ENCODE measurements at regions of chr6 and their contacts with region 1.

Region 1: GRCh38 chr6:147202516-147203312 is 1.5 kb upstream of the STXBP5 start:
- DNase-seq: peak; percentile 60 to 96 (median 70)
- ATAC-seq: peak; percentile 84
- H3K4me3 ChIP-seq: peak overlapping the region; percentile 86
- H3K4me3 Mint-ChIP-seq: peak overlapping the region; percentile 94
- H3K27ac ChIP-seq: peak overlapping the region; percentile 89 to 94
- H3K27ac Mint-ChIP-seq: peak overlapping the region; percentile 95
- H3K4me1 ChIP-seq: peaks cover 15% of the 10 kb centered on the region
- H3K4me1 Mint-ChIP-seq: peaks cover 38% of the 10 kb centered on the region
- H3K27me3 ChIP-seq: no peaks in the 10 kb centered on the region
- H3K27me3 Mint-ChIP-seq: no peaks in the 10 kb centered on the region
- CTCF ChIP-seq: no peak

Region 2: GRCh38 chr6:145332001-145332400 is 1870.7 kb before region 1 on chr6:
- CTCF ChIA-PET with region 1: no interaction called
- POLR2A ChIA-PET with region 1: no interaction called
- intact Hi-C with region 1: no loop called
- DNase-seq: no peak
- ATAC-seq: no peak
- H3K4me3 ChIP-seq: no peak overlapping the region
- H3K4me3 Mint-ChIP-seq: no peak overlapping the region
- H3K27ac ChIP-seq: no peak overlapping the region
- H3K27ac Mint-ChIP-seq: no peak overlapping the region
- H3K4me1 ChIP-seq: no peaks in the 10 kb centered on the region
- H3K4me1 Mint-ChIP-seq: no peaks in the 10 kb centered on the region
- H3K27me3 ChIP-seq: peaks cover 0 to 3% of the 10 kb centered on the region in 2 experiments
- H3K27me3 Mint-ChIP-seq: no peaks in the 10 kb centered on the region
- CTCF ChIP-seq: no peak

Region 3: DNA sequence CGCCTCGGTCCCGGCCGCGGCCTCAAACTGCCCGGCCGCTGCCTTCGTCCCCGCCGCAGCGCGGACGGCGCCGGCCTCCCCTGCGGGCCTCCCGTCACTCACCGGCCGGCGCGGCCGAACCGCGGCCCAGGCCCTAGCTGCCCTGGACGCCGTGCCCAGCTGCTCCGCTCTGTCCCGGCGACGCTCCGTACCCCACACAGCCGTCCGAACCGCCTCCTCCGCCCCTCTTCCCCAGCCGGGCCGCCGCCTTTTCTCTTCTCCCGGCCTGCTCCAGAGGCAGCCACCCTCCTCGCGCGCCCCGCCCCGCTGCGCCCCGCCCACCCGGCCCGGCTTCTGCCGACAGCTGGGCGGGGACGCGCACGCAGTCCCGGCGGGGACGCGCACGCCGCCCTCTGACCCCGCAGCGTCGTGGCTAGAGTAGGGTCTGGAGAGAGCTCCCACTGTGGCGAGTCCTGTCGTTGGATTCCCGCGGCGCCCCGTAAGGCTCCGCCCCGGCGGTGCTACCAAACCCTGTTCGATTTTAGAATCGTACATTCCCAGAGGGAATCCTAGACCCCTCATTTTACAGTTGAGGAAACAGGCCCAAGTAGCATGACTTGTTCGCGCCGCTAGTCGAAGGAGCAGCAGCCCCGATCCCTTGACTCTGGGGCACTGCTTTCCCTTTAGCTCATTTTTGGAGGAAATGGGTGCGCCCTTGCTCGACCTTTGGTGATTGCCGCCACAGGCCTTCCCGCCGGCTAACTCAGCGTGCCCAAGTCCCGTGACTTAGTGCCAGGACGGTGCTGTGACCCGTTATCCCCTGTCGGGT is 1388.0 kb before region 1 on chr6 and contains the start of gene FBXO30:
- CTCF ChIA-PET with region 1: no interaction called
- POLR2A ChIA-PET with region 1: no interaction called
- intact Hi-C with region 1: loop called in 1 of 2 experiments (anchors 10 kb)
- DNase-seq: peak; percentile 72 to 96 (median 83)
- ATAC-seq: peak; percentile 87
- H3K4me3 ChIP-seq: peak within 1 kb of the TSS; percentile 91
- H3K4me3 Mint-ChIP-seq: peak within 1 kb of the TSS; percentile 98
- H3K27ac ChIP-seq: peak within 1 kb of the TSS; percentile 68 to 85
- H3K27ac Mint-ChIP-seq: peak within 1 kb of the TSS; percentile 94
- H3K4me1 ChIP-seq: peaks cover 19% of the 10 kb centered on the region
- H3K4me1 Mint-ChIP-seq: peaks cover 68% of the 10 kb centered on the region
- H3K27me3 ChIP-seq: no peaks in the 10 kb centered on the region
- H3K27me3 Mint-ChIP-seq: no peaks in the 10 kb centered on the region
- CTCF ChIP-seq: no peak
- total RNA-seq, gene FBXO30: 1.3 to 1.4 TPM

Region 4: GRCh38 chr6:147077251-147077650 is 125.5 kb before region 1 on chr6:
- CTCF ChIA-PET with region 1: no interaction called
- POLR2A ChIA-PET with region 1: no interaction called
- intact Hi-C with region 1: no loop called
- DNase-seq: no peak
- ATAC-seq: no peak
- H3K4me3 ChIP-seq: no peak overlapping the region
- H3K4me3 Mint-ChIP-seq: no peak overlapping the region
- H3K27ac ChIP-seq: no peak overlapping the region
- H3K27ac Mint-ChIP-seq: no peak overlapping the region
- H3K4me1 ChIP-seq: no peaks in the 10 kb centered on the region
- H3K4me1 Mint-ChIP-seq: no peaks in the 10 kb centered on the region
- H3K27me3 ChIP-seq: no peaks in the 10 kb centered on the region
- H3K27me3 Mint-ChIP-seq: no peaks in the 10 kb centered on the region
- CTCF ChIP-seq: no peak

Region 5: DNA sequence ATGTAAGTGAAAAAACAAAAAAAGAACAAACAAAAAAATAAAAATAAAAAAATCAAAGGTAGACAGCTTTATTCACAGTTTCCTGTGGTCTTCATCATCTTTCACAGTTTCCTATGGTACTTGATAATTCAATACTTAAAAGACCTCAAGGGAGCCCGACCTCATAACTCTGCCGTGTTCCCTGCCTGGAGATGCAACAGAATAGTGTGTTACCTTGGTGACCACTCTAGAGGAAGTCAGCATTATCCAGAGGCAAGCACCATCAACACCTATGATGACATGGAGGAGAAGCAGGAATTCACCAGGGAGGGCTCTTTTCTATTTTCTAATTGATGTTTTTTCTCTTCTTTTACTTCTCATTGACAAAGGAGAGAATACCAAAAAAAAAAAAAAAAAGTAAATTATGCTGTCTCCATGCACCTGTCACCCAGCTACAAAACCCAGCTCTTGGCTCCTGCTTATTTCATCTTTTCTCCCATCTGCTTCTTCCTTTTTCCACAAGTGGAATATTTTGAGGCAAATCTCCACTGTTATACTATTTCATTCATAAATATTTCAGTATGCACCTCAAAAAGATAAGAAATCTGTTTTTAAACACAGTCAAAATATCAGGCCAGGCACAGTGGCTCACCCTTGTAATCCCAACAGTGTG is 94.3 kb before region 1 on chr6:
- CTCF ChIA-PET with region 1: no interaction called
- POLR2A ChIA-PET with region 1: interaction called, 19 read pairs
- intact Hi-C with region 1: loop called (anchors 2 to 5 kb)
- DNase-seq: peak in 1 of 14 experiments; percentile 7
- ATAC-seq: no peak
- H3K4me3 ChIP-seq: no peak overlapping the region
- H3K4me3 Mint-ChIP-seq: peak overlapping the region; percentile 58
- H3K27ac ChIP-seq: no peak overlapping the region
- H3K27ac Mint-ChIP-seq: peak overlapping the region; percentile 60
- H3K4me1 ChIP-seq: peaks cover 21% of the 10 kb centered on the region
- H3K4me1 Mint-ChIP-seq: peaks cover 61% of the 10 kb centered on the region
- H3K27me3 ChIP-seq: no peaks in the 10 kb centered on the region
- H3K27me3 Mint-ChIP-seq: no peaks in the 10 kb centered on the region
- CTCF ChIP-seq: no peak

Region 6: DNA sequence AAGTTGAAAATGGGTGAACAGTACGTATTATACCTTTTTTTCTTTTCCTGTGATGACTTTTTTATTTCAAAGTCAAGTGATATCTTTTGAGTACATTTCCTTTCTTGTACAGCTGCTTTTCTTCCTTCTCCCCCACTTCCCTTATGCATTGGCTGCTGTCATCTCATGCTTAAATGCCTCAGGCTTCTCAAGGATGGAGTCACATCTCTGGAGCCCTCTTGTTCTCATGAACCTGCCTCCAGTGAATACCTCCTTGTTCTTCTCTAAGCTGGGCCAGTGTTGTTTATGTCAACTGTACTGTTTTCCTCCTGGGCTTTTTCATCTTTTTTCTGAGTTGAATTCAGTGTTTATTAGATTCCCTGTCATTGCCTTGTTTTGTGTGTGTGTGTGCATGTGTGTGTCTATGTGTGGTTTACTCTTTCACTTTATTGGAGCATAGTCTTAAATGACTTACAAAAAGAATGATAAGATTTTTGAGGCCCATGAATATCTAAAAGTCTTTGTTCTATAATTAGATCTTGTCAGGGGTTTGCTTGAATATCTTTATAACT is 25.1 kb after region 1 on chr6:
- CTCF ChIA-PET with region 1: no interaction called
- POLR2A ChIA-PET with region 1: interaction called, 11 read pairs
- intact Hi-C with region 1: no loop called
- DNase-seq: no peak
- ATAC-seq: no peak
- H3K4me3 ChIP-seq: no peak overlapping the region
- H3K4me3 Mint-ChIP-seq: no peak overlapping the region
- H3K27ac ChIP-seq: no peak overlapping the region
- H3K27ac Mint-ChIP-seq: no peak overlapping the region
- H3K4me1 ChIP-seq: no peaks in the 10 kb centered on the region
- H3K4me1 Mint-ChIP-seq: peaks cover 45% of the 10 kb centered on the region
- H3K27me3 ChIP-seq: no peaks in the 10 kb centered on the region
- H3K27me3 Mint-ChIP-seq: no peaks in the 10 kb centered on the region
- CTCF ChIP-seq: no peak

Region 7: DNA sequence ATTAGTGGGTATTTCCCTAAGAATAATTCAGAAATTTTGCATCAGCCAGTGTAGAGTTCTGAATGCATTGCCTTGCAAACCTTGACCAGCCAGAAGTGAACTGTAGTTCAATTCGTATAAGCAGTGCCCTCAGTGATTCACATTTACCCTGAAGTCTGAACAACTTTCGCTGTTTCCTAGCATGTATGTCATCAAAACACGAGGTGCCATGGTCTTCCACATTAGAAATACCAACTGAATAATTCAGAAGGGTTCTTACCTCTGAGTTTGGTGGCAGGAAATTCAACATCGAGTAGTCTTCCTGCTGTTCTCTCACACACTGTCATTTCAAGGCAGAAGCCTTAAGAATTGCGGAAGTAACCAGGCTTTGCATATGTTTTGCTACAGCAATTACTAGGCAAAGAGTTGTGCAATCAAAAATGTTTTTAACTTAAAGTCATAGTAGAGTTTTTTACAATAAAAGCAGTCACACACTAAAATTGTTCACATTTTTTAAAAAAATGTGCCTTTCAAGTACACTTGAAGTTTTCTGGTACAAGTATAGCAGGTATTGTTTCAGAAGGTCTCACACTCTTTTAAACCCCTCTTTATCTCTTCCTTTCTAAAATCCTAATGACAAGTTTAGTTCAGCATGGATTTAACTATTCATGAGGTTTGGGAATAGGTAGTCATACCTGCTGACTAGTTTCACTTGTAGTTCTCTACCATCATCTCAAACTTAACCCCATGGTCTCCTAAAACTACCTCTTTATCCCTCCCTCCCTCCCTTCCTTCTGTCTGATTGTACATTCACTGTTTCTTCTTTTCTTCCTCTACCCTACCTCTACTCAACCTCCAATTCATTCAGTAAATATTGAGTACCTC is 119.8 kb after region 1 on chr6:
- CTCF ChIA-PET with region 1: no interaction called
- POLR2A ChIA-PET with region 1: no interaction called
- intact Hi-C with region 1: loop called in 1 of 2 experiments (anchors 10 kb)
- DNase-seq: peak in 4 of 14 experiments; percentile 6 to 61 (median 58)
- ATAC-seq: peak; percentile 89
- H3K4me3 ChIP-seq: peak overlapping the region; percentile 29
- H3K4me3 Mint-ChIP-seq: peak overlapping the region; percentile 65
- H3K27ac ChIP-seq: peak overlapping the region in 1 of 2 donors; percentile 49
- H3K27ac Mint-ChIP-seq: peak overlapping the region; percentile 82
- H3K4me1 ChIP-seq: peaks cover 6% of the 10 kb centered on the region
- H3K4me1 Mint-ChIP-seq: peaks cover 21% of the 10 kb centered on the region
- H3K27me3 ChIP-seq: no peaks in the 10 kb centered on the region
- H3K27me3 Mint-ChIP-seq: no peaks in the 10 kb centered on the region
- CTCF ChIP-seq: no peak